IMR-90 (cell line): ENCODE measurements at regions of chr11 and their contacts with region 1.

Region 1: DNA sequence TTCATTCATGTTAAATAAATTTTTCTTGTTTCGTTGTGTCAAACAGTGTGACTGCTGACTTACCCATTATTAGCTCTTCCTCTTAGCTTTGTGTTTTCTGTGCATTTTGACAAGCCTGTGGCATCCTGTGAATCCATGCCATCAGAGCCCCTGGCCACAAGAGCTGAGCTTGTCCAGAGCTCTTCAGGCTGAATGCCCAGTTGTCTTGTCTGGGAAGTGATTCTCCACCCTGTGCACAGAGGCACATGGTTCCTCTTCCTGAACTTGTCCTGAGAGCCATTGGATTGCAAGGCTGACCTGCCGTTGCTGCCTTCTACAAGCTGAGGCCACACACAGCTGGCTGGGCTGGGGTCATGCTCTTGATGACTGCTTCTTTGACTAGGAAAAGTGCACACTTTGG is 64.1 kb downstream of the PPP6R3 start:
- DNase-seq: no peak
- ATAC-seq: no peak
- H3K4me3 ChIP-seq: no peak overlapping the region
- H3K27ac ChIP-seq: no peak overlapping the region
- H3K4me1 ChIP-seq: no peaks in the 10 kb centered on the region
- H3K27me3 ChIP-seq: no peaks in the 10 kb centered on the region
- CTCF ChIP-seq: no peak
- POLR2A ChIP-seq: no peak
- RAD21 ChIP-seq: no peak

Region 2: DNA sequence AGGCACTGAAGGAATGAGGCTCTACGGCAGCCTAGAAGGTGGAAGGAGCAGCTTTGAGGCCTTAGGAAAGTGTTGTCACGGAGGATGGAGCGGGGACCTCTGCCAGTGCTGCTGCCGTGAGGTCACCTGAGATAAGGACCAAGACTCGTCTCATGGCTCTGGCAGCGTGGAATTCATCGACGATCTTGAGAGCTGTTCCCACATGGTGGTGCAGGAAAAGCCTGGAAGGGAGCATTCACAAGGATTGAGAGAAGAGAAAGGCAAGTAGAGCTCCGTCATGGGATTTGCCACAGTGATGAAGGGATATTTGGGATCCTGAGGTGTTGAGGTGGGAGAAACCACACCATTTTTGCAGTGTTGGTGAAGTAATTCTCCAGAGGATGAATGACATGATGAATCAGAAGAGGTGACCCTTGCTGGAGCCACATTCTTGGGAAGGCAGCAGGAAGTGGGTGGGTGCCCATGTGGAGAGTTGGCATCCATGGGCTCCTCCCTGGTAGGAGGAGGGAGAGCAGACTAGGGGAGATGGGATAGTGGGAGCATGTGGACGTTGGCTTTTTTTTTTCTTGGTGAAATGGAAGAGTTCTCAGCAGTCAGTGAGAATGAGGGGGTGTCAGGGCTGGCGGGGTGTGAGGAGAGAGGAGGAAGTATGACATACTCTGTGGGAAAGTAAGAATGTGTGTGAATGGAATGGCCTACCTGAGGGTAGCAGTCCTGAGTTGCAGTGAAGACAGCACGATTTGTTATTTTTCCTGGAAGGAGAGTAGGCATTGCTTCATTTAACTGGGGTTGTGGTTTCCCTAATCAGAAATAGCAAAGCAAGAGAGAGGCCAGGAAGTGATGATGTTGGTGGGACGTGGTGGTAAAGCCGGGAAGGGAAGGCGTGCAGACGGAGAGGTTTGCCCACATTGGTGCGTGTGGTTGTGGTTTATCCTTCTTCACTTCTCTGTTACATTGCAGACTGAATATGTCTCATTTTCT is 53.0 kb before region 1 on chr11:
- CTCF ChIA-PET with region 1: no interaction called
- POLR2A ChIA-PET with region 1: no interaction called
- dilution Hi-C with region 1: no loop called
- in situ Hi-C with region 1: no loop called
- intact Hi-C with region 1: no loop called
- DNase-seq: peak; percentile 29
- ATAC-seq: no peak
- H3K4me3 ChIP-seq: no peak overlapping the region
- H3K27ac ChIP-seq: no peak overlapping the region
- H3K4me1 ChIP-seq: peaks cover 16% of the 10 kb centered on the region
- H3K27me3 ChIP-seq: no peaks in the 10 kb centered on the region
- CTCF ChIP-seq: no peak
- POLR2A ChIP-seq: no peak
- RAD21 ChIP-seq: no peak

Region 3: DNA sequence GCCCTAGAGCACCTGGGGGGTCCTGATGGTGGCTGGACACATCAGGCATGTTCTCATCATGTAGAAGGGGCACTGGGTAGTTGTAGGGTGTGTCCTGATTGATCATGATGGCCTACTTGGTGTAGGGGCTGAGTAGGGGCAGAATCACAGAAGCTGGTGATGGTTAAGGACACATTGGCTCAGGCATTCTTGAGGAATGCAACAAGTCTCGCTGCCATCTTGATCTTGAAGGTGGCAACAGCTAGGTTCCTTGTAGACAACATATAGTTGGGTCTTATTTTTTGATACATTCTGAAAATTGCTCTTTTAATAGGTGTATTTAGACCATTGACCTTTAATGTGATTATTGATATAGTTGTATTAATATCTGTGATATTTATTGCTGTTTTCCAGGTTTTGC is 36.1 kb before region 1 on chr11:
- CTCF ChIA-PET with region 1: no interaction called
- POLR2A ChIA-PET with region 1: no interaction called
- dilution Hi-C with region 1: no loop called
- in situ Hi-C with region 1: no loop called
- intact Hi-C with region 1: loop called (anchors 5 kb)
- DNase-seq: no peak
- ATAC-seq: no peak
- H3K4me3 ChIP-seq: no peak overlapping the region
- H3K27ac ChIP-seq: no peak overlapping the region
- H3K4me1 ChIP-seq: no peaks in the 10 kb centered on the region
- H3K27me3 ChIP-seq: no peaks in the 10 kb centered on the region
- CTCF ChIP-seq: no peak
- POLR2A ChIP-seq: no peak
- RAD21 ChIP-seq: no peak